Mammary epithelial cell (primary cell): ENCODE measurements at regions of chr10 and their contacts with region 1.

Region 1: DNA sequence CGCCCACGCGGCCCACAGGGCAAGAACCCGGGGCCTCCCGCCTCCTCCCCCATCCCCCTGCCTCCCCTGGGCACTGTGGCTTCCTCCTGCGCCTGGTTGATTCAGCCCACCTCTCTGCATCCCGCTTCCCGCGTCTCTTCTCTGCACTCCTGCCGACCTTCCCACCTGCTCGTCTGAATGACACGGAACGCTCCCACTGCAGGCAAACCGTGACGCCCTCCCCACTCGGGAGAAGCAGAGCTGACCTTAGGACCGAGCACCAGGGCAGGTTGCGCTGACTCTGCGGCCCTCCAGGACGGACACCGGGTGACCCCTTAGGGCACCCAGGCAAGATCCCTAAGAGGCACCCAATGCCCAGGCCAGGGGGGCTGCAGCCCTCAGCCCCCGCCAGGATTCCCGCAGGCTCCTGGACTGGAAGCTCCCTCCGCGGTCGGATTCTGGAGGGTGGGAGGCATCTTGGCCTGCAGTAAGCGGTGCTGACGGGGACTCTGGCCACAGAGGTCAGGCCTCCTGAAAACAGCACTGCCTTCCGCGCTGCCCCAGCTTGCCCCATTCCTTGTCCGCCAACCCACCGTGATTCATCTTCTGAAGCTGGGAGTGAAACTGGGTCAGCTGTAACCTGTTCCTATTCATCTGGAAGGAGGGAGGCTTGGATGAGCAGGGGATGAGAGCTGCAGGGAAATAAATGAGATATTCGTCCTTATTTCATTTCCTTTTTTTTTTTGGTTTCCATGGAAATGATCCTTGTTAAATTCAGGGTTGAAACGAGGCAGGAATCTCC is 990 bp downstream of the CALML3 start:
- DNase-seq: peak; percentile 90
- H3K4me3 ChIP-seq: peak overlapping the region; percentile 6 to 46 (median 43)
- H3K27ac ChIP-seq: peak overlapping the region; percentile 69
- H3K4me1 ChIP-seq: peaks cover 29% of the 10 kb centered on the region
- H3K27me3 ChIP-seq: no peaks in the 10 kb centered on the region
- CTCF ChIP-seq: no peak

Region 2: DNA sequence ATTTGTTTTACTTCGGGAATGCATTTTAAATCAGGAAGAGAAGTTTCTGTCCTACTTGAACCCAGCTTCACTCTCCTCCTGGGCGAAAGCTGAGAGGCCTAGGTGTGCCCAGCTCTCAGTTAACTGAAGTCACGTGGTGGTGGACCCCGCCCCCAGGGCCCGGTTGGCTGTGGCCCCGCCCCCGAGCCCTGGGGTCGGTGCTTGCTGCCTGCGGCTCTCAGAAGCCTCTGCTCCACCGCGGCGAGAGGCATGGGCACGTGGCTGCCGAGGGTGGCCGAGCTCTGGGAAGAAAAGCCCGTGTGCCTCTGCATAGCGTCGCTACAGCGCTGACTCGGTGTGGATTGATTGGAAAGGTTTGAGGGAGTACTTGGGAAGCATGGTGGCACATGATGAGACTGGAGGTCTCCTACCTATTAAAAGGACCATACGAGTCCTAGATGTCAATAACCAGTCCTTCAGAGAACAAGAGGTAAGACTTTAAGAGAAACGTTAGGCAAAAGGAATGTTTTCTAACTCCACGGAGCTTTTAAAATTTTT is 79.3 kb before region 1 on chr10:
- CTCF ChIA-PET with region 1: no interaction called
- dilution Hi-C with region 1: no loop called
- in situ Hi-C with region 1: no loop called
- intact Hi-C with region 1: loop called (anchors 2 kb)
- DNase-seq: peak; percentile 95
- H3K4me3 ChIP-seq: no peak overlapping the region
- H3K27ac ChIP-seq: no peak overlapping the region
- H3K4me1 ChIP-seq: peaks cover 27% of the 10 kb centered on the region
- H3K27me3 ChIP-seq: no peaks in the 10 kb centered on the region
- CTCF ChIP-seq: no peak

Region 3: GRCh38 chr10:5614155-5614721 is 88.5 kb after region 1 on chr10:
- CTCF ChIA-PET with region 1: no interaction called
- dilution Hi-C with region 1: no loop called
- in situ Hi-C with region 1: no loop called
- intact Hi-C with region 1: loop called (anchors 2 kb)
- DNase-seq: no peak
- H3K4me3 ChIP-seq: no peak overlapping the region
- H3K27ac ChIP-seq: peak overlapping the region; percentile 46
- H3K4me1 ChIP-seq: peaks cover 71% of the 10 kb centered on the region
- H3K27me3 ChIP-seq: no peaks in the 10 kb centered on the region
- CTCF ChIP-seq: no peak